Left ventricle myocardium superior (tissue), 1 donor: ENCODE measurements at regions of chr6 and their contacts with region 1.

Region 1: GRCh38 chr6:46419576-46420002 is 71.7 kb downstream of the RCAN2 start:
- DNase-seq: no peak
- ATAC-seq: peak; percentile 49

Region 2: DNA sequence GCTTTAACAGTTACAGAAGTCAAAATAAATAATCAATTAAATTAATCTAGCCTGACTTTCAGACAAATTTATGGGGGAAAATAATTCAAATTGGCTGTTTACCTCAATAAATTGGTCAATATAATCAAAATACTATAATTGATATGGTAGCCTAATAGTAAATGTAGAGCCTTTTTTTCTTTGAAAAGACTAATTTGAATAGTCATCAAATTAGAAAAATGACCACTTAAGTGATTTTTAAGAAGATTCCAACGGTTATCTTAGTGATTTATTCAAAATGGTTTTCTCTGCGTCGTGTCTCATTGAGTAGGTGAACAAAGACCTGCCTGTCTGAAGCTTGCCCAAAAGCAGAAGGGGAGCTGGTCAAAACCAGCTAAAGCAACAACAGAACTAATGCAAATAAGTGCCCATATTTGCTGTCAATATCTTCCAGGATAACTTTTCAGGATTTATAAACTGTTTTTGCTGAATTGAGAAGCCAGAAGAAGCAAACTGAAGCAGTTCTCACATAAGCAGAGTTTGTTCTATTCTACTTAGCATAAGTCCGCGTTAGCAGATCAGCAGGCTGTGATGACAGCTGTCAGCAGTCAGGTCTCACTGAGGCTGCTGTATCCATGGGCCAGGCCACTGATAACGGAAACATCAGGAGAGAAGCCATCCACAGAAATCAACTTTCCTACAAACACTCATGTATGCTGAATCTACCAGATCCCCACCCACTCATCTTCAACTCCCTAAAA is 64.7 kb after region 1 on chr6:
- intact Hi-C with region 1: loop called (anchors 5 kb)
- DNase-seq: peak; percentile 69
- ATAC-seq: peak; percentile 83

Region 3: DNA sequence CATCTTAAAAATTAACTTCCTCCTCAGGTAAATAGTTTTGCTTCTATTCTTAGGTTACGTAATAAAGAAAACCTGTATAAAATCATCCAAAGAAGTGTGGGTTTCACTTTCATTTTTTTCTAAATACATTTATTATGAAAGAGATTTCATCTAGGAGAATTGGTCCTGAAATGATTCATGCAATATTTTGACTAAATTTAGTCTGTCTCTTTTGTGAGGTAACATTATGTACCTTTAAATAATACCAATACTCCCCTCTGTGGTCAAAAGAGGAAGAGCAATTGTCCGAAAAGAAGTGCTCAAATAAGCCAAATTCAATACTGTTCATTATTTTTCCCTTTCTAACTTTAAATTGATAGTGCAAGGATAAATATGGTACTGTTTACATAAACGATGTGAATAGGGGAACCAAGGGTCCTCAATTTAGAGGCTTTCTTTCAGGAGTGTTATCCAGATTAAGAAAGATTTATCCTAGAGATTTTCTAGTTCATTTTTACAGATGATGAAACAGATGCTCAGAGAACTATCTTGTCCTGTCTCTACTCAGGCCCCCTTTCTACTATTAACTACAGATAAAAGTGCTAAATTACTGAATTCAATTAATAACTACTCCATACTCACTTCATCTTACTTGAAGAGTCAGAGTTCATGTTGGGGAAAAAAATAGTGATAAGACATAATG is 206.8 kb after region 1 on chr6:
- intact Hi-C with region 1: loop called (anchors 5 kb)
- DNase-seq: no peak
- ATAC-seq: peak; percentile 58